ENCODE measurements at regions of chr6 and their contacts with region 1.

Region 1: DNA sequence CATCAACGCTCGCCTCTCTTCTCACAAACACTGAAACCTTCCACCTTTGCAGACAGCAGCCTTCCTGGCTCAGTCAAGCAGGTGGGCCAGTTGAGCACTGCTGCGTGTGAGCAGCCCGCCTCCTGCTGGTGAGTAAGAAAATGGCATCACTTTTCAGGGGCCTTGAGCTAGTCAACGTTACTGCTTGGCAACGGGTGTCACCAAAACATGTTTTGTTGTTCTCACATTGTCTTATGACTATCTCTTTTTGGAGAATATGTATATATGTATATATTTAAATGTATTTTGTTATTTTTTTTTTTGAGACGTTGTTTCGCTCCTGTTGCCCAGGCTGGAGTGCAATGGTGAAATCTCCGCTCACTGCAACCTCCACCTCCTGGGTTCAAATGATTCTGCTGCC is 97.0 kb upstream of the AGPAT4 start:
- DNase-seq: peak; percentile 77
- H3K4me3 Mint-ChIP-seq: no peak overlapping the region
- H3K27ac Mint-ChIP-seq: no peak overlapping the region
- H3K4me1 Mint-ChIP-seq: peaks cover 13% of the 10 kb centered on the region
- H3K27me3 Mint-ChIP-seq: no peaks in the 10 kb centered on the region
- CTCF ChIP-seq: peak; percentile 95

Region 2: GRCh38 chr6:160733050-160733646 is 637.7 kb before region 1 on chr6:
- CTCF ChIA-PET with region 1: interaction called, 83 read pairs
- POLR2A ChIA-PET with region 1: interaction called, 4 read pairs
- intact Hi-C with region 1: loop called (anchors 1 kb)
- DNase-seq: peak; percentile 60
- H3K4me3 Mint-ChIP-seq: no peak overlapping the region
- H3K27ac Mint-ChIP-seq: no peak overlapping the region
- H3K4me1 Mint-ChIP-seq: peaks cover 6% of the 10 kb centered on the region
- H3K27me3 Mint-ChIP-seq: no peaks in the 10 kb centered on the region
- CTCF ChIP-seq: peak; percentile 85

Region 3: DNA sequence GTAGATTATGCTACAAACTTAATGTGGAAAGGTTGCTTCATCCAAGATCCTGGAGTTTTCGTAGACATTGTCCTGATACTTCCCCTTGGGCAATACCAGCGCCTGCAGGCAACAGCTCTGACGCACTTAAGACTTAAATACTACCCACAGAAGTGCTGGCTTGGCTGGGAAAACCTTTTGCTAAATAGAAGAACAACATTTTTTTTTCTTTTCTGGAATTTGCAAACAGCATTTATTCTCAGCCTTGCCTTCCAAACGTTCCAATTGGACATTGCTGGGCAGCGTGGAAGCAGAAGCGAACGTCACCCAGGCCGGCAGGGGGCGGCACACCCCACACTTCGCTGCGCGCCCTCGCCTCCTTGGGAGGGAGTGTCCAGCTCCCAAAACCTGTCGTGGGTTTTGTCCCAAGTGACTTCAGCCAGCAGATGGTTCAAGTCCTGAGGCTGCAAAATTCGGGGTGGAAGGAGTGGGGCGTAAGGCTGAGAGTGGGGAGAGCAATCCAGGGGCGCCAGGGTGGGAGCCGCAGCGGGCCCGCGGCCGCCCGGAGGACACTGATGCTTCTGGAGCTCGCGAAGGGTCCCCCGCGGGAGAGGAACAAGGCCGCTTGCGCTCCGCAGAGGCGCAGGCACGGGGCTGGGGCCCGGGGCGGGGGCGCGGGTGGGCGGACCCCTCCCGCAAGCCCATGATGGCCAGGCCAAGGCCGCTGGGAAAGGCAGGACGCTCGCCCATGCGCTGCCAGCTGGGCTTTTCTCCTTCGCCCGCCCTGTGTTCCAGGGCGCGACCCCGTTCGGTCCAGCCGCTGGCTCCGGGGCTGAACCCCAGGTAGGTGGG is 440.1 kb before region 1 on chr6:
- CTCF ChIA-PET with region 1: interaction called, 113 read pairs
- POLR2A ChIA-PET with region 1: interaction called, 6 read pairs
- intact Hi-C with region 1: loop called (anchors 1 kb)
- DNase-seq: peak; percentile 91
- H3K4me3 Mint-ChIP-seq: peak overlapping the region; percentile 71
- H3K27ac Mint-ChIP-seq: peak overlapping the region; percentile 71
- H3K4me1 Mint-ChIP-seq: peaks cover 11% of the 10 kb centered on the region
- H3K27me3 Mint-ChIP-seq: no peaks in the 10 kb centered on the region
- CTCF ChIP-seq: peak; percentile 94

Region 4: DNA sequence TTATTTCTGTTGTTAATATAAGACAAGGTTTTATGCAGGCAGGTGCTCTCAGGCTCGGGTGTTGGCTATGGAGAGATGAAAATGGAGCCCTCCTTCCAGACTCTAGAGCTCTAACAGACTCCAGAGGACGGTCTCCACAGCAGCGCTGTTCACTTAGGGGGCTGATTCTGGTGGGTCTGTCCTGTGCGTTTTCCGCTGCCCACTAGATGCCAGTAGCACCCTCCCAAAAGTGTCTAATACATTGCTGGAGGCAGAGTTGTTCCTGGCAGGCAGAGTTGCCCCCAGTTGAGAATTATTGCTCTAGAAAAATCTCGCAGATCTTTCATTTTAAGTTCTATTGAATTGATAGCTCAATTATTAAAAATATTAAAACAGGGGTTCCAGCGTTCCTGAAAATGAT is 269.4 kb before region 1 on chr6:
- CTCF ChIA-PET with region 1: interaction called, 14 read pairs
- POLR2A ChIA-PET with region 1: interaction called, 6 read pairs
- intact Hi-C with region 1: no loop called
- DNase-seq: no peak
- H3K4me3 Mint-ChIP-seq: no peak overlapping the region
- H3K27ac Mint-ChIP-seq: no peak overlapping the region
- H3K4me1 Mint-ChIP-seq: peaks cover 11% of the 10 kb centered on the region
- H3K27me3 Mint-ChIP-seq: no peaks in the 10 kb centered on the region
- CTCF ChIP-seq: no peak

Region 5: GRCh38 chr6:161161889-161162624 is 208.8 kb before region 1 on chr6:
- CTCF ChIA-PET with region 1: interaction called, 21 read pairs
- POLR2A ChIA-PET with region 1: interaction called, 4 read pairs
- intact Hi-C with region 1: no loop called
- DNase-seq: no peak
- H3K4me3 Mint-ChIP-seq: no peak overlapping the region
- H3K27ac Mint-ChIP-seq: no peak overlapping the region
- H3K4me1 Mint-ChIP-seq: no peaks in the 10 kb centered on the region
- H3K27me3 Mint-ChIP-seq: no peaks in the 10 kb centered on the region
- CTCF ChIP-seq: no peak

Region 6: GRCh38 chr6:161215193-161215592 is 155.7 kb before region 1 on chr6:
- CTCF ChIA-PET with region 1: no interaction called
- POLR2A ChIA-PET with region 1: no interaction called
- intact Hi-C with region 1: no loop called
- DNase-seq: peak; percentile 47
- H3K4me3 Mint-ChIP-seq: no peak overlapping the region
- H3K27ac Mint-ChIP-seq: peak overlapping the region; percentile 56
- H3K4me1 Mint-ChIP-seq: peaks cover 6% of the 10 kb centered on the region
- H3K27me3 Mint-ChIP-seq: no peaks in the 10 kb centered on the region
- CTCF ChIP-seq: no peak

Region 7: DNA sequence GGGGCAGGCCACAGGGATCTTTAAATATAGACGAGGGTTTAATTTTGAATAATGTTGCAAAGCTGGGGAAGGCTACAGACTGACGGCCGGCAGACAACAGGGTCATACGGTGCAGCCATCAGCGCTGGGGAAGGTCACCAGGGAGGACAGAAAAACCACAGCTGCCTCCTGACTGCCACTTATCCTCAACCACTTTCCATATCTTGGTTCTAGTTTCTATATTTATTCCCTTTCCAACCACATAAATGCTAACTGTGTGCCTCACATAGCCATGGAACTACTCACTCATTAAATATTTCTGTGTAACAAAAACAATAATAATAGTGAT is 11.3 kb before region 1 on chr6:
- CTCF ChIA-PET with region 1: interaction called, 10 read pairs
- POLR2A ChIA-PET with region 1: no interaction called
- intact Hi-C with region 1: no loop called
- DNase-seq: no peak
- H3K4me3 Mint-ChIP-seq: no peak overlapping the region
- H3K27ac Mint-ChIP-seq: no peak overlapping the region
- H3K4me1 Mint-ChIP-seq: peaks cover 8% of the 10 kb centered on the region
- H3K27me3 Mint-ChIP-seq: no peaks in the 10 kb centered on the region
- CTCF ChIP-seq: no peak

Region 8: DNA sequence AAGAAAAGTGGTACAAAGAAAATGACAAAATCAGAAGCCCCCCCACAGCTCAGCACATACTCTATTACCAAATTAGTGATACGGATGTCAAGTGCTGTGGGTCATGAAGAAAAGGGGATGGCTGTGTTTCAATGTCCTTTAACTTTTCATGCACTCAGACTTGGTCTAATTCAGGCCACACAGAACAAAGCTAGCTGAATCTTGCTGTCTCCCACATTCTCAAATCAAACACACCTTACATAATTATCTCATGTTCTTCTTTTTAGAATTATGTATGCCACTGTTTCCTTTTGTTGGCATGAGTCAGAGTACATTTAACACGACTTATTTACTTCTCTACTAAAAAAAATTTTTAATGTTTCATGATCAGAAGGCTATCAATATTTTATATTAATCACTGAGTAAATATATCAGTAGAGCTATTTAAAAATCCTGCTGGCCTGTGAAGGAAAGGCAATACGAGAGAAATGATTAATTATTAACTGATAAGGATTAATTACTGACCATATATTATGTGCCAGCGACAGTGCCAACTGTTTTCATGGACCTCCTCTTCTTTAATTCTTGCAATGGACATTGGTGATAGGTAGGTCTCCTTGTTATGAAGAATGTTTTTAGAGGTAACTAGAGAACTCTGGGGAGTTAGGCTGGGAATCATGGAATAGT is 499.5 kb after region 1 on chr6:
- CTCF ChIA-PET with region 1: no interaction called
- POLR2A ChIA-PET with region 1: no interaction called
- intact Hi-C with region 1: no loop called
- DNase-seq: no peak
- H3K4me3 Mint-ChIP-seq: no peak overlapping the region
- H3K27ac Mint-ChIP-seq: no peak overlapping the region
- H3K4me1 Mint-ChIP-seq: no peaks in the 10 kb centered on the region
- H3K27me3 Mint-ChIP-seq: no peaks in the 10 kb centered on the region
- CTCF ChIP-seq: no peak

Measured in MCF 10A (cell line).